ENCODE measurements at regions of chr11 and their contacts with region 1.

Region 1: DNA sequence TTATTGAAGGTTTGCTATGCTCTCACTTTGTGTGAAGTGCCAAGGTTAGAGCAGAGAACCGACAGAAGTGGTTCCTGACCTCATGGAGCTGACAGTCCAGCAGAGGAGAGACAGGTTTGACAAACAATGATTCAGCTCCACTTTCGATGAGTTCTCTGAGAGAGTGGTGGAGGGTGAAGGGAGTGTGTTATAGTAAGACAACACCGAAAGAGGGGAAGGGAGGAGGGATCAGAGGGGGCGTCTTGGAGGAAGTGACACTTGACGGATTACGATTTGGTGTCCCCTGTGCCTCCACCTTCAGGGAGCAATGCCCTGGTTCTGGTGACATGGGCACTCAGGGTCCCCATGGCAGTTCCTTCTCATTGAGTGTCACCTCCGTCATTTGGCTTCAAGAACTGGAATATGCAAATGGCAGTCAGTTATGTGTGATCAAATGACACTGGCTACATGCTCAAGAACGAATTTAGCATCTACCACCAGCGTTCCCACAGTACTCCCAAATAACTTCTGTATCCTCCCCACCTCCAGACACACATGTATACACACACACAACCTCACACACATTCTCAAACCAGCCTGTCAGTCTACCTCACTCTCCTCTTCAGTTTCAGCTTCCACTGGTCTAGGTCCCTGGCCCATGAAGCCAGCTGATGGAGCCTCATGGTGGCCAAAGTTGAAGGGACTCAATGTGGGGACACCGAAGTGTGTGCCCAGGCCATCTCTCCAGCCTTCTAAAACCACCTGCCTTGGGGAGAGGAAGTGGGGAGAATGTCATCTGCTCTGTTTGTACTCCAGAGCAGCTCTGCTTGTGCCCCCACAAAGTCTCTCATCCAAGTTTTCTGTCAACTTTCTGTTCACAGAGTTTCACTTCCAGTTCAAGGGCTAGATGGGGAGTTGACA is 31.4 kb upstream of the NUP160 start:
- DNase-seq: no peak
- ATAC-seq: no peak
- H3K4me3 ChIP-seq: no peak overlapping the region
- H3K27ac ChIP-seq: no peak overlapping the region
- H3K4me1 ChIP-seq: no peaks in the 10 kb centered on the region
- CTCF ChIP-seq: no peak
- EP300 ChIP-seq: no peak
- POLR2A ChIP-seq: no peak
- RAD21 ChIP-seq: no peak

Region 2: GRCh38 chr11:47786373-47786772 is 93.1 kb before region 1 on chr11:
- CTCF ChIA-PET with region 1: no interaction called
- POLR2A ChIA-PET with region 1: no interaction called
- DNase-seq: no peak
- ATAC-seq: peak in 1 of 2 experiments; percentile 57; a peak in 5 of 6 replicates
- H3K4me3 ChIP-seq: no peak overlapping the region
- H3K27ac ChIP-seq: no peak overlapping the region
- H3K4me1 ChIP-seq: no peaks in the 10 kb centered on the region
- CTCF ChIP-seq: no peak
- EP300 ChIP-seq: no peak
- POLR2A ChIP-seq: no peak
- RAD21 ChIP-seq: no peak

Region 3: DNA sequence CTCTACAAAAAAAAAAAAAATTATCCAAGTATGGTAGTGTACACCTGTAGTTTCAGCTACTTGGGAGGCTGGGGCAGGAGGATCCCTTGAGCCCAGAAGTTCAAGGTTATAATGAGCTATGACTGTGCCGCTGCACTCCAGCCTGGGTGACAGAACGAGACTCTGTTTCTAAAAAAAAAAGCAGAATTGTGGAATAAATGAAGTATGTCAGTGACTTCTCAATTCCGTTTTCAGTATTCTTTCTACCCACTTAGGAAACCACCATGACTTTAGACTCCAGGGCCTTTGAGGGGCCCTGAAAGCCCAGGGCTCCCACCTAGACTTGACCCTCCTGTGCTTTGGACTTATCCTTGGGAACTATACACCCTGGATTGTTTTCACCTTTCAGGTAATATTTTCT is 24.8 kb before region 1 on chr11:
- CTCF ChIA-PET with region 1: interaction called, 11 read pairs
- POLR2A ChIA-PET with region 1: no interaction called
- DNase-seq: no peak
- ATAC-seq: no peak
- H3K4me3 ChIP-seq: no peak overlapping the region
- H3K27ac ChIP-seq: peak overlapping the region in 1 of 2 experiments; percentile 89; a peak in 2 of 6 replicates
- H3K4me1 ChIP-seq: peaks cover 53% of the 10 kb centered on the region
- CTCF ChIP-seq: no peak
- EP300 ChIP-seq: no peak
- POLR2A ChIP-seq: no peak
- RAD21 ChIP-seq: no peak

Region 4: DNA sequence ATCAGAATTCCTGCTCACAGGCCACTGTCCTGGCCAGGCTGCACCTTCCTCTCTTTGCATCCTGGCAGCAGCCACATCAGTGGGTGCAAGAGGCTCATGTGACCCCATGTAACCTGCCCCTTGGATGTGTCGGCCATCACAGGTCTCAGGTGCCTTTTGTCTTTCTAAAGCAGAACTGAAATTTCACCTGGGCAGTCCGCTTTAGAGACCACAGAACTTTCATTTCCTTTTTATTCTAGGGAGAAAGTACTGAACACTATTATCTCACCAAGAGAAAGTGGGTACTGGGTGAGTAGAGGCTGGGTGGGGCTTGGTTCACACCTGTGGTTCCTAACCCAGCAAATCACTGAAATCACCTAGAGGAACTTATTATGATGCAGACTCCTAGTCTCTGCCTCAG is 20.3 kb after region 1 on chr11:
- CTCF ChIA-PET with region 1: no interaction called
- POLR2A ChIA-PET with region 1: no interaction called
- DNase-seq: no peak
- ATAC-seq: no peak
- H3K4me3 ChIP-seq: no peak overlapping the region
- H3K27ac ChIP-seq: no peak overlapping the region
- H3K4me1 ChIP-seq: no peaks in the 10 kb centered on the region
- CTCF ChIP-seq: no peak
- EP300 ChIP-seq: no peak
- POLR2A ChIP-seq: no peak
- RAD21 ChIP-seq: no peak